ENCODE measurements at regions of chr10 and their contacts with region 1.

Region 1: GRCh38 chr10:79487296-79488194 is 24.8 kb upstream of the EIF5AL1 start:
- DNase-seq: peak; percentile 39
- H3K4me3 Mint-ChIP-seq: no peak overlapping the region
- H3K27ac Mint-ChIP-seq: no peak overlapping the region
- H3K4me1 Mint-ChIP-seq: no peaks in the 10 kb centered on the region
- H3K27me3 Mint-ChIP-seq: peaks cover 30% of the 10 kb centered on the region

Region 2: GRCh38 chr10:79463578-79464496 is 23.7 kb before region 1 on chr10:
- CTCF ChIA-PET with region 1: interaction called, 12 read pairs
- DNase-seq: no peak
- H3K4me3 Mint-ChIP-seq: no peak overlapping the region
- H3K27ac Mint-ChIP-seq: no peak overlapping the region
- H3K4me1 Mint-ChIP-seq: no peaks in the 10 kb centered on the region
- H3K27me3 Mint-ChIP-seq: peaks cover 10% of the 10 kb centered on the region

Region 3: GRCh38 chr10:79477456-79477855 is 10.1 kb before region 1 on chr10:
- CTCF ChIA-PET with region 1: interaction called, 16 read pairs
- DNase-seq: no peak
- H3K4me3 Mint-ChIP-seq: no peak overlapping the region
- H3K27ac Mint-ChIP-seq: no peak overlapping the region
- H3K4me1 Mint-ChIP-seq: no peaks in the 10 kb centered on the region
- H3K27me3 Mint-ChIP-seq: peaks cover 36% of the 10 kb centered on the region